ENCODE measurements at regions of chr12 and their contacts with region 1.

Region 1: DNA sequence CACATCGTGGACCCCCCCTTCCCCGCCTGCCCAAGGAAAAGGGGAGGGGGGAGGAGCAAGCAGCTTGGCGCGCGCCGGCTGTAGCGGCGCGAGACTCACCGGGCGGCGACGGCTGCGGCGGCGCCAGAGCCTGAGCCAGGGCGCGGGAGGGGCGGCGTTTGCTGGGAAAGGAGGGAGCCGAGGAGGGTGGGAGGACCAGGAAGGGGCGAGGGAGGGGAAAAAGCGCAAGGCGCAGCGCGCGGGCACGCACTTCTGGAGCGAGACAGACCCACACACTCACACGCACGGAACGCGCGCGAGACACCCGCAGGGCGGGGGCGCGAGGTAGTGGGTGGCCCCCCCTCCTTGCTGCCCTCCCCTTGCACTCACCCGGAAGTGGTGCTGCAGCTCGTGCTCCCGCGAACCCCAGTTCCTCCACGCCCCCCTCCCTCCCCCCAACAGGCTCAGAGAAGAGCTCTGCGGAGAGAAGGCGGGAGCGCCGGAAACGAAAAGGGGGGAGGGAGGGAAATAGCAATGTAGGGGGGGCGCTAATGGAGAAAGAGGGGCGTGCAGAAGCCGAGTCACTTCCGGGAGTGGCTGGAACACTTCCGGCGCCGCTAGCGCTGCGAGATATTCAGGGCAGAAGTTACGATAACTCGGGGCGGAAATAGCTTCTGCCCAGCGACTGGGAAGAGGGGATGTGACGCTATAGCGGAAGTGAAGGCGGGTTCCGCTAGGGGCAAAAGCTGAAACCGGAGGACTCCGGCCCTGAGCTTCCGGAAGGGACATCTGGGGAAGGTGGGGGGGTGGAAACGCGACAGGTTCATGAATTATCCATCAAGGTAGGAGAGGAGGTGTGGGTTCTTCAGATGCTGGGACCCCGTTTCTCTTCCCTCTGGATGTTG is at the start of gene ZNF384:
- DNase-seq: peak; percentile 97
- H3K4me3 Mint-ChIP-seq: peak within 1 kb of the TSS; percentile 92
- H3K27ac Mint-ChIP-seq: peak within 1 kb of the TSS; percentile 97
- H3K4me1 Mint-ChIP-seq: peaks cover 44% of the 10 kb centered on the region
- H3K27me3 Mint-ChIP-seq: no peaks in the 10 kb centered on the region
- total RNA-seq, gene ZNF384: 55.3 to 56.3 TPM

Region 2: DNA sequence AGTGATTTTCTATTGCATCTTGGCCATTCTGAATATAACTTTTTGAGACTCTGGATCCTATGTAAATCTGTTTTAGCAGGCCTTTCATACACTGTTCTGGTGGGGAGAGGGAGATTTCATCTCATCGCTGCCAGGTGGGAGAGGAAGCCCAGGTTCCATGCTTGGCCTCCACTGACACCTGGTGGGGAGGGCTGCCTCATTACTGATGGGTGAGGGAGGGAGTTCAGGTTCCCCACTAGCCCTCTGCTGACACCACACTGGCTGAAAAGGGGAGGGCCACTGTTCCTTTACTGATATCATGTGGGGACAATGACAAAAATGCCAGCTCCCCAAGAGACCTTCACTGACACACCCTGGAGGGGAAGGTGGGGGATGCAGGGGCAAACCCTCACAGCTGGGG is 1971.4 kb before region 1 on chr12:
- CTCF ChIA-PET with region 1: no interaction called
- POLR2A ChIA-PET with region 1: no interaction called
- intact Hi-C with region 1: no loop called
- DNase-seq: no peak
- H3K4me3 Mint-ChIP-seq: no peak overlapping the region
- H3K27ac Mint-ChIP-seq: no peak overlapping the region
- H3K4me1 Mint-ChIP-seq: no peaks in the 10 kb centered on the region
- H3K27me3 Mint-ChIP-seq: peaks cover 20% of the 10 kb centered on the region

Region 3: DNA sequence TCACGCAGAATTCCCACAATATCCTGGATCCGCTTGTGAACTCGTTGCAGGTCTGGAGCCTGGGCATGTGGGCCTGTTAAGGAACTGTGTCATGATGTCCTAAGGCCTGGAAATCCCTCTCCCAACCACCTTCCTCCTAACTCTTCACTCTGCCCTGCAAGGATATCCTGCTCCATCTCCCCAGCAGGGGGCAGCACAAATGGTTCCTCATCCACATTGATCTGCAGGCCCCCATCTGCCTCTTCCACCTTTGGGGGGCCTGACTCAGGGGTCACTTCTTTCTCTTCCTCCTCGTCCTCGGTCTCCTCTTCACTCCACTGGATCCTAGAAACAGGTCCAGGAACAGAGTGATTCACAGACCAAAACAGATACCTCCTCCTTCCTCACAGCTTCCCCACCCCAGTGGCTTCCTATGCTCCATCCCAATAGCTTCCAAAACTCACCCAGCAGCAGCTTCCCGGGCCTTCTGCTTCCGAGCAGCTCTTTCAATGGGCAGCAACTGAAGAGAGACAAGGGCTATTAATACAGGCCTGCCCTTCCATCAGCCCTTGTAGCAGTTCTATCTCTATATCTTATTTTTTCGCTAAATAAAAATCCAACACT is 125.7 kb before region 1 on chr12:
- CTCF ChIA-PET with region 1: interaction called, 4 read pairs
- POLR2A ChIA-PET with region 1: no interaction called
- intact Hi-C with region 1: loop called (anchors 1 kb)
- DNase-seq: peak; percentile 75
- H3K4me3 Mint-ChIP-seq: no peak overlapping the region
- H3K27ac Mint-ChIP-seq: no peak overlapping the region
- H3K4me1 Mint-ChIP-seq: peaks cover 42% of the 10 kb centered on the region
- H3K27me3 Mint-ChIP-seq: no peaks in the 10 kb centered on the region

Region 4: DNA sequence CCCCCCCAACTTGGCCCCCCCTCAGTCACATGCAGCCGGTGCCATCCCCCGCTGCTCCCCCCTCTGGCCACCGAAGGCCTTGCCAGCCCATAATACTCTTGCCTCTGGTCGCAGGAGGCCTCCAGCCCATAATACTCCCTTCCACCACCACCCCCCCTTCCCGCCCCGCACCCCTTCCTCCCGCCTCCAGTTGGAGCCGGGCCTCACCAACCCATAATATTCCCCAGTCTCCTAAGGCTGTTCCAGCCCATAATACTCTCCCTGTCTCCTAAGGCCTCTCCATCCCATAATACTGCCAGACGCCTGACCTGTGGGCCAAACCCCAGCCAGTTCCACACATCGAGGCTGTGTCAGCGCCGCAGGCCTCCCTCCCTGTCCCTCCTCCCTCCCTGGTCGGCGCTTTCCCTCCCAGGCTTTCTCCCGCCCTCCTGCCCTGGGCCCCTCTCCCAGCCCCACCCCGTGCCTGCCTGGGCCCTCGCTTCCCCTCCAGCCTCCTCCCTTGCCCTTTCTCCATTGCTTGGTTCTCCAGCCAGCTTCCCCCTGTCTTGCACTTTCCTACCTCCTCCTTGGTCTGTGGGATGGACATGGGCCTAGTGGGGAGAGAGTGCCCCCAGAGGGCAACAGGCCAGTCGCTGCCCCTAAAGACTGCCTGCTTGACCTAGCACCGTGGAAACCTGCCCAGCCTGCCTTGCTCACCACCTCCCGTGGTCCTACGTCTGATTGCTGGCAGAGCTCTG is 75.3 kb before region 1 on chr12:
- CTCF ChIA-PET with region 1: interaction called, 15 read pairs
- POLR2A ChIA-PET with region 1: no interaction called
- intact Hi-C with region 1: loop called (anchors 1 kb)
- DNase-seq: peak; percentile 45
- H3K4me3 Mint-ChIP-seq: no peak overlapping the region
- H3K27ac Mint-ChIP-seq: peak overlapping the region; percentile 38
- H3K4me1 Mint-ChIP-seq: peaks cover 38% of the 10 kb centered on the region
- H3K27me3 Mint-ChIP-seq: no peaks in the 10 kb centered on the region

Region 5: GRCh38 chr12:6644903-6645302 is 44.3 kb before region 1 on chr12:
- CTCF ChIA-PET with region 1: no interaction called
- POLR2A ChIA-PET with region 1: no interaction called
- intact Hi-C with region 1: no loop called
- DNase-seq: no peak
- H3K4me3 Mint-ChIP-seq: no peak overlapping the region
- H3K27ac Mint-ChIP-seq: no peak overlapping the region
- H3K4me1 Mint-ChIP-seq: peaks cover 5% of the 10 kb centered on the region
- H3K27me3 Mint-ChIP-seq: no peaks in the 10 kb centered on the region

Region 6: DNA sequence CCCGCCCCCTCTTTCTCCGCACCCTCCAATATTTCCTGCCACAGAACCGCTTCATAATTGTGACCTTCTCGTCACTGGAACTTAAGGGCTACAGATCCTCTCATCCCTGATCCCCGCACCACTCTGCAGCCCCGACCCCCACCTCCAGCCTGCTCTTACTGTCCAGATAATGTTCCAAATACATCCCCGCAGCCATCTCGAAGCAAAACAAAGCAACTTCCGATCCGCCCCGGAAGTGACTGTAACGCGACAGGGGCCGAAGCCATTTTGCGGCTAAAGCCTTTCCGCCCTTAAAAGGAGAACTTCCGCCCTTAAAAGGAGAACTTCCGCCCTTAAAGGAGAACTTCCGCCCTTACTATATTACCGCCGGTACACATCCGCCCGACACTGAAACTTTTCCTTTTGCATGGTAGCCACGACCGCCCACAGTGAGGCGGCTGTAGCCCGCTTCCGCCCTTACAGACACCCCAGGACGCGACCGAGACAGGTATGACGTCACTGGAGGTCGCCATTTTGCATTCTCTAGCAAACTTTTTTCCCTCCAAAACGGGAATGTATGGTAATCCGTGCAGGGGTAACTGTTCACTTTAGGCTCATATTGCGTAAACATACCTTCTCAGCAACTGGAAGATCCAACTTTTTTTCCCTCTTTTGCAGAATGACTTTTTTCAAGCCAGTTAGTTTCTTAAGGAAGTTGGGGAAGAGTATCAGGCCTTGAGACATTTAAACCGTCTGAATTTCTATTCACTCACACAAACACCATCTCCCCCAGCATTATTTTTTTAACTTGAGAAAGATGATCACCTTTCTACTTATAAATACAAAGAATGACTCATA is 26.1 kb before region 1 on chr12 and contains the start of gene ING4:
- CTCF ChIA-PET with region 1: interaction called, 18 read pairs
- POLR2A ChIA-PET with region 1: no interaction called
- intact Hi-C with region 1: loop called (anchors 1 kb)
- DNase-seq: peak; percentile 98
- H3K4me3 Mint-ChIP-seq: peak within 1 kb of the TSS; percentile 91
- H3K27ac Mint-ChIP-seq: peak within 1 kb of the TSS; percentile 83
- H3K4me1 Mint-ChIP-seq: peaks cover 22% of the 10 kb centered on the region
- H3K27me3 Mint-ChIP-seq: no peaks in the 10 kb centered on the region
- total RNA-seq, gene ING4: 13.8 to 15.2 TPM

Region 7: GRCh38 chr12:6778574-6779550 is 89.6 kb after region 1 on chr12:
- CTCF ChIA-PET with region 1: interaction called, 11 read pairs
- POLR2A ChIA-PET with region 1: no interaction called
- intact Hi-C with region 1: no loop called
- DNase-seq: peak; percentile 94
- H3K4me3 Mint-ChIP-seq: peak overlapping the region; percentile 67
- H3K27ac Mint-ChIP-seq: peak overlapping the region; percentile 46
- H3K4me1 Mint-ChIP-seq: peaks cover 77% of the 10 kb centered on the region
- H3K27me3 Mint-ChIP-seq: no peaks in the 10 kb centered on the region